Caco-2 (cell line): ENCODE measurements at regions of chr1 and their contacts with region 1.

Region 1: GRCh38 chr1:204806943-204807687 is 63.5 kb upstream of the NFASC start:
- DNase-seq: peak; percentile 86 to 90
- H3K4me3 ChIP-seq: peak overlapping the region; percentile 34
- H3K4me3 Mint-ChIP-seq: peak overlapping the region; percentile 70
- H3K27ac Mint-ChIP-seq: no peak overlapping the region
- H3K4me1 ChIP-seq: no peaks in the 10 kb centered on the region
- H3K4me1 Mint-ChIP-seq: no peaks in the 10 kb centered on the region
- H3K27me3 ChIP-seq: no peaks in the 10 kb centered on the region
- H3K27me3 Mint-ChIP-seq: peaks cover 6% of the 10 kb centered on the region
- CTCF ChIP-seq: peak; percentile 99

Region 2: DNA sequence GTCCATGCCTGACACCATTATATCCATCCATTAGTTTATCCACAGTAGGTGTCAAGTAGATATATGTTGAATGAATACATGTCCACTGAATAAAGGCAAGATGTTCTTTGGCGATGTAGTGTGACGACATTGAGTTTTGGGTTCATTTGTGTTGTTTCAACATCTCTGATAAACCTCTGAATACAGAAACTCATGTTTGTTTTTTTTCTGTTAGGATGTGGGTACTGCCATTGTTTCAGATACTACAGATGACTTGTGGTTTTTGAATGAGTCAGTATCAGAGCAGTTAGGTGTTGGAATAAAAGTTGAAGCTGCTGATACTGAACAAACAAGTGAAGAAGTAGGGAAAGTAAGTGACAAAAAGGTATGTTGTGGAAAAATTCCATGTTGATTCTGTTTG is 262.8 kb before region 1 on chr1:
- CTCF ChIA-PET with region 1: no interaction called
- POLR2A ChIA-PET with region 1: no interaction called
- intact Hi-C with region 1: no loop called
- DNase-seq: no peak
- H3K4me3 ChIP-seq: no peak overlapping the region
- H3K4me3 Mint-ChIP-seq: no peak overlapping the region
- H3K27ac Mint-ChIP-seq: no peak overlapping the region
- H3K4me1 ChIP-seq: no peaks in the 10 kb centered on the region
- H3K4me1 Mint-ChIP-seq: no peaks in the 10 kb centered on the region
- H3K27me3 ChIP-seq: no peaks in the 10 kb centered on the region
- H3K27me3 Mint-ChIP-seq: no peaks in the 10 kb centered on the region
- CTCF ChIP-seq: no peak

Region 3: DNA sequence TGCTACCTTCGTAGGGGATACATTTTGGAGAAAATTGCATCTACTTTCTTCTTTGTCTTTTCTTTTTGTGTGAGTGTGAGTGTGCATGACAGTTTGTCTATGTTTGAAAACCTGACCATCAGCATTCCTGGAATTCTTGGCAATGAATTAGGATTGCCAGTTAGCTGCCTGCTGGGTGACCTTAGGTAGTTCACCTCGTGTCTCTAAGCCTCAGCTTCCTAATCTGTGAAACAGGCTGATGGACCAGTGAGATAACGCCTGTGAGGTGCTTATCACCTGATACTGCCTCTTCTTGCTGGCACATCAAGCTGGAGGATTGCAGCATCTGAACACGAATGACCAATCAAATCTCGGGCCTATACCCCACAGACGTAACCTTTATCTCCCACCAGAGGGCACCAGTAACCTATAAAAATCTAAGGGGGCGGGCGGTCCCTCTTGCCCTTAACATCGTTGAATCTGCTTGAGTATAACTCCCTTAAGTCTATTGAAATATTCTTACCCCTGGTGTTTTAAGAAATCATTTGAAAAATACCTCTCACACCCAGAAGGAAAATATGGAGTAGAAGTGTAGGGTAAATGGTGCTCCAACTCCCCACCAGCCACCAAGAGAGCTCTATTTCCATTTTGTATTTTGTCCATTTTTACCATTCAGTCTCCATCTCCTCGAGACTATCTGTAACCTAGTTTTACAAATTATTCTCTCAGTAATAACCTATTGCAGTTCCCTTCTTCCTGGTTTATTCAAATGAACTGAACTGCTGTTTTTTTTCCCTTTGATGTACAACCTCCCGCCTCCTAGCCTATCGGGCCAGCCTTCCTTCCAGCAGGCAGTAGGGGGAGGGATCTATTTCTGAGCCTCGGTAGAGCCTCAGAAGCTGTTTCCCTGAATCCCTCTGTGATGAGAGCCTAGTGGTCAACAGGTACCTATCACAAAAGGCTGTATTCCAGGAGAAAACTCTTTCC is 241.2 kb before region 1 on chr1:
- CTCF ChIA-PET with region 1: interaction called, 40 read pairs
- POLR2A ChIA-PET with region 1: no interaction called
- intact Hi-C with region 1: loop called (anchors 1 kb)
- DNase-seq: peak; percentile 75 to 78
- H3K4me3 ChIP-seq: no peak overlapping the region
- H3K4me3 Mint-ChIP-seq: peak overlapping the region; percentile 22
- H3K27ac Mint-ChIP-seq: peak overlapping the region; percentile 40
- H3K4me1 ChIP-seq: peaks cover 24% of the 10 kb centered on the region
- H3K4me1 Mint-ChIP-seq: peaks cover 46% of the 10 kb centered on the region
- H3K27me3 ChIP-seq: no peaks in the 10 kb centered on the region
- H3K27me3 Mint-ChIP-seq: no peaks in the 10 kb centered on the region
- CTCF ChIP-seq: peak; percentile 53 to 78

Region 4: DNA sequence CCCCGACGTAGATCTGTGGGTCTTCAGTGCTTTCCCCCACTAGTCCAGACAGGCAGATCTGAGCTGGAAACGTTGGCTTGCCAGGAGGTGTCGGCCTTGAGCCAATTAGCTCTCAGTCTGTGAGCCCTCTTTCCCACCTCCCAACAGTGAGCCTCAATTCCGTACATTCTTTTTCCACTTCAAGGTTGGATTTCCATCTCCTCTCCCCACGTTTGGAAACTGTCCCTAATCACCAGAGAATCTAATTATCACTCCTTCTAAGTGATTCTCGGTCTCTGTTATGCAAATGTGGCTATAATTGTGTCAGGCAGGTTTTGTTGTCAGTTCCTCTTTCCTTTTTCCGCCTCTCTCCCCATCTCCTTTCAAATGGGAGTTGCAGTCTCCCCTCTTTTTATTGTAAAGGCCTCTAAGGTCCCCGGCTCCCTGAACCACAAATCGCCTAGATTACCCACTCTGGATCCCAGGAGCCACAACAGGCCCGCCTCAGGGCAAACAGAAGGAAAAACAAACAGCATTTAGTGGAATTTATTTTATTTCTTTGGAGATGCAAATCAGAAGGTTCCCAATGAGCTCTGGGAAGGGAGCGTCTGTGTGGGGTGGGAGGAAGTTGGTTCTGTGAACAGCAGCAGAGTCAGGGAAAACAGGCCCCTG is 92.1 kb before region 1 on chr1:
- CTCF ChIA-PET with region 1: interaction called, 14 read pairs
- POLR2A ChIA-PET with region 1: no interaction called
- intact Hi-C with region 1: no loop called
- DNase-seq: peak in 1 of 2 experiments; percentile 1
- H3K4me3 ChIP-seq: no peak overlapping the region
- H3K4me3 Mint-ChIP-seq: no peak overlapping the region
- H3K27ac Mint-ChIP-seq: no peak overlapping the region
- H3K4me1 ChIP-seq: peaks cover 3% of the 10 kb centered on the region; the same call in 1 of the 2 replicates
- H3K4me1 Mint-ChIP-seq: peaks cover 20% of the 10 kb centered on the region
- H3K27me3 ChIP-seq: no peaks in the 10 kb centered on the region
- H3K27me3 Mint-ChIP-seq: no peaks in the 10 kb centered on the region
- CTCF ChIP-seq: no peak

Region 5: GRCh38 chr1:204791453-204792353 is 15.4 kb before region 1 on chr1:
- CTCF ChIA-PET with region 1: interaction called, 26 read pairs
- POLR2A ChIA-PET with region 1: no interaction called
- intact Hi-C with region 1: no loop called
- DNase-seq: peak; percentile 74 to 75
- H3K4me3 ChIP-seq: no peak overlapping the region
- H3K4me3 Mint-ChIP-seq: no peak overlapping the region
- H3K27ac Mint-ChIP-seq: no peak overlapping the region
- H3K4me1 ChIP-seq: no peaks in the 10 kb centered on the region
- H3K4me1 Mint-ChIP-seq: no peaks in the 10 kb centered on the region
- H3K27me3 ChIP-seq: no peaks in the 10 kb centered on the region
- H3K27me3 Mint-ChIP-seq: peaks cover 22% of the 10 kb centered on the region
- CTCF ChIP-seq: peak; percentile 69 to 80

Region 6: DNA sequence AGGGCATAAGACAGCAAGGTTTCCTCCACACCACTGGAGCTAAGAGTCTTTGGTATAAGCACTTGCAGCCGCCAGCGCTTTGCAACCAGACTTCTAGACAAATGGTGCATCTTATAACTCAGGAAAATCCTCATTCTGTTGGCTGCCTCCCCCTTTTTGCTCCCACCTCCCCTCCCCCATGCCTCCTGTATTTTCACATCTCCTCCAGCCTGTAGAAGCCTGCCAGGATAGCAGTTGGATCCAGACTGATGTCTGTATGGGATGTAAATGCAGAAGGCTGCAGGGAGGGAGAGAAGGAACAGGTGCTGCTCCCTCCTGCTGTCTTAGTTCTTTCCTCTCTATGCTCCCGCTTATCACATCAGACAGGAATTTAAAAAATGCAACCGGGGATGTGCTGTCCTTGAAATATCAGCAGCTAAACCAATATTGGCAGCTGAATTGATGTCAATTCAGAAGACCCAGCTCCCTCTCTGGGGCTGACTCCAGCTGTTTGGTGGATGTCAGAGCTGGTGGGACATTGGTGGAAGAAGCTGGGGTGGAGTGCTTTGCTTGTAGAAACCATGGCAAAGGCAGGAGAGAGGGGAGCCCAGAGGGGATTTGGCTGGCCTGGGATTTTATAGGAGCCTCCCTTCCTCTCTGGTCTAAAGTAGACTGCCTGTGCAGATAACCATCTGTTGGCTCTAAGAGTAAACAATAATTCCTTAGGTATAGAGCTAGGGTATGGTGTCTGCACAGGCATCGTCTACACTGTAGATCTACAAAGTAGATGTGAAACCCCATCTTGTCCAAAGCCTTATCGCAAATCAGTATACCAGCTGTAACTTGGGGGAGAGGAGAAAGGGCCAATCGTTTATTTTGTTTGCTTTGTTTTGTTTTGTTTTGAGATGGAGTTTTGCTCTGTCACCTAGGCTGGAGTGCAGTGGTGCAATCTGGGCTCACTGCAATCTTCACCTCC is 117.2 kb after region 1 on chr1:
- CTCF ChIA-PET with region 1: interaction called, 10 read pairs
- POLR2A ChIA-PET with region 1: no interaction called
- intact Hi-C with region 1: no loop called
- DNase-seq: peak; percentile 68 to 73
- H3K4me3 ChIP-seq: no peak overlapping the region
- H3K4me3 Mint-ChIP-seq: peak overlapping the region; percentile 57
- H3K27ac Mint-ChIP-seq: peak overlapping the region; percentile 89
- H3K4me1 ChIP-seq: peaks cover 61% of the 10 kb centered on the region
- H3K4me1 Mint-ChIP-seq: peaks cover 54% of the 10 kb centered on the region
- H3K27me3 ChIP-seq: no peaks in the 10 kb centered on the region
- H3K27me3 Mint-ChIP-seq: no peaks in the 10 kb centered on the region
- CTCF ChIP-seq: no peak